GM18951 (cell line): ENCODE measurements at regions of chr10 and their contacts with region 1.

Region 1: DNA sequence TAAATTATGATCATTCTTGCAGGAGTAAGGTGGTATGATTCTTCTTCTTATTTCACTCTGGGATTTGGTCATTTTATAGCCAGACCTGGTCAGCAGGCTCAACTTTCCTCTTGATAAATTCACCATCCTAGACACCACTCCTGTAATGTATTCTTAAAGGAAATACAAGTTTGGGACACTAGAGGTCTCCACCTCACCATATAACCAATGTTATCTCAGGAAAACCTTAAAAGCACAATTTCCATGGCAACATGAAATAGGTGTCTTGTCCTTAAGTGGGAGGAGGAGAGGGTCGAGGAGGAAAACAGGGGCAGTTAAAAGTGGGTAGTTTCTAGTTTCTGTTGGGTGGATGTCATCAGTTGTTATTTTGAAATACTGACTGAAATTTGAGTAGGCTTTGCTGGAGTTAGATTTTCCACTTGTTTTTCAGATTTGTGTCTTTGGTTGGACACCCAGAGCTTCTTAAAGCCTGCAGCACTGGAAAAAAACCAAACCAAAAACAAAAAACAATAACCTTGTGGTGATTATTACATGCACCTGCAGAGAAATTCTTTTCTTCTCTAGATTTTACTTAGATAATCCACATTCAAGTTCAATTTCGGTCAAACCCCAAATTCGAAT is 163.1 kb downstream of the PRKCQ start:
- POLR2A ChIP-seq: no peak

Region 2: DNA sequence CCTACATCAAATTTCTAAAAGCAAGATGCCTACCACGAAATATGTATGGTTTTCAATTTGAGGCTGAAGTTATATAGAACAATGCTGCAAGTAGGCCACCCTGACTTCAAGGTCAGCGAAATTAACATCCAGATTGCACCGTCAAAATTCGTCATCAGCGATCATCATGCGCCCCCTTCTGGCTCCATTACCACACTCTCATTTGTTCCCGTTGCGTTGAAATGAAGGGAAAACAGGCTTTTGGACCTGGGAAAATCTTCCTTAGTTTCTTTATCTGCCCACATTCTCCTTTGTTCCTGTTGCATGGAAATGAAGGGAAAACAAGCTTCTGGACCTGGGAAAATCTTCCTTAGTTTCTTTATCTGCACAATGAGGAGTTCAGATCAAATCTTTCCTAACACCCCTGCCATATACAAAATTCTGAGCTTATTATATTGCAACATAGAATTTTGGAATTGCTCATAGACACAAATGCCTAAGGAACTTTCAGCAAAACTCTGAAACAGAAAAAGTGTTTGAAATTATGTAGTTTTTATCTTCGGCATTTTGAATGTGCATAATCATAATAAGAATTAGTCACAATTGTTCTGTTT is 261.3 kb after region 1 on chr10:
- in situ Hi-C with region 1: loop called (anchors 10 kb)
- POLR2A ChIP-seq: no peak